ENCODE measurements at regions of chr1 and their contacts with region 1.

Region 1: DNA sequence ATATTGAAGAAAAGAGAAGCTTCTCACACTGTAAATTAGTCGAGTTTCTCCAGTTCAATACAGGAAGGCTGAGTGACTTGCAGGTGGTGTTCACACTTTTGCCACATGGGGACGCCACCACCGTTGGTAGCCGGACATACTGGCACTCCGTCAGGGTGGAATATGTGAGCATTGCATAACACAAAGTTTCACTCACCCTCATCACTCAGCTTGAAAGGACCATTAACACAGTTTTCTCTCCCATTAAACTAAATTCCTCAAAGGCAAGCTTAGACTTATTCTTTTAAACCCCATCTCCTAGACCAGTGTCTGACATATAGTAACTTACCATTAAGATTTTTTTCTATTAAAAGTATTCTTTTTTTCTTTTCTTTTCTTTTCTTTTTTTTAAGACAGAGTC is 105.3 kb upstream of the SERBP1 start:
- DNase-seq: peak; percentile 89
- H3K4me3 Mint-ChIP-seq: no peak overlapping the region
- H3K27ac Mint-ChIP-seq: no peak overlapping the region
- H3K4me1 Mint-ChIP-seq: no peaks in the 10 kb centered on the region
- H3K27me3 Mint-ChIP-seq: no peaks in the 10 kb centered on the region
- CTCF ChIP-seq: peak; percentile 83

Region 2: GRCh38 chr1:67760030-67760821 is 224.8 kb after region 1 on chr1:
- CTCF ChIA-PET with region 1: interaction called, 48 read pairs
- intact Hi-C with region 1: loop called (anchors 1 kb)
- DNase-seq: peak; percentile 67
- H3K4me3 Mint-ChIP-seq: no peak overlapping the region
- H3K27ac Mint-ChIP-seq: no peak overlapping the region
- H3K4me1 Mint-ChIP-seq: peaks cover 39% of the 10 kb centered on the region
- H3K27me3 Mint-ChIP-seq: no peaks in the 10 kb centered on the region
- CTCF ChIP-seq: peak; percentile 53

Region 3: DNA sequence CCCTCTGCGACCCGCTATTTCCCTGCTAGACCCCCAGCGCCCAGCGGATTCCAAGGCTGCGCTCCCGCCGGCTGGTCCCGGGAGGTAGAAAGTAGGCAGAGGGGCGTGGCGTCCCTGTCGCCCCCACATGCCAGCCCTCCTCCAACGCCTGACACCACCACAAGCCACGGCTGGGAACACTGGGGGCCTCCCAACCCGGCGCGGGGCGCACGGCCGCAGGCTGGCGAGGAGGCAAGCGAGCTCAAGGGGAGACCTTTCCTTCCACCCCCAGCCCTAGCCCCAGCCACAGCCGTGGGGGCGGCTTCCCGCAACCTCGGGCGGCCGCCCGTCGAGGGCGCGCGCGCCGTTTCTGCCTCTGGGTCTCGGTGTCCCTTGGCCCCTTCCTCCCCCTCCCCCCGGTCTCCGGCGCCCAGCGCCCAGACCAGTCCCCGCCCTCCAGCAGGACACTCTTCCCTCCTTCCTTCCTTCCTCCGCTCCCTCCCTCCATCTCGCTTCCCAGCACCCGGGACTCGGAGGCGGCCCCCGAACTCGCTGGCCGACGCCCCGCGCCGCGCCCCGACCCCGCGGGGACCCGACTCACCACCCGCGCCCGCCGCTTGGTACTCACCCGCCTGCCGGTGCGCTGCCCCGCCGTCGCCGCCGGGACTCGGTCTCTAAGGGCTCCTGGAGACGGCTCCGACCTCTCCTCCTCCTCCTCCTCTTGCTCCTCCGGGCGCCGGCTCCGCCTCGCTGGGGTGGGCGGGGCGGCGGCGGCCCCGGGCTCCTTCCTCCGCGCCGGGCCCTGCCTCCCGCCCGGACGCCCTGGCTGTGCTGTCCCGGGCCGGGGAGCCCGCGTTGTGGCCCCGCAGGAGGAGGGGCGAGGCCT is 297.5 kb after region 1 on chr1 and contains the start of gene GNG12:
- CTCF ChIA-PET with region 1: no interaction called
- intact Hi-C with region 1: loop called (anchors 5 kb)
- DNase-seq: peak; percentile 84
- H3K4me3 Mint-ChIP-seq: peak within 1 kb of the TSS; percentile 95
- H3K27ac Mint-ChIP-seq: peak within 1 kb of the TSS; percentile 98
- H3K4me1 Mint-ChIP-seq: peaks cover 13% of the 10 kb centered on the region
- H3K27me3 Mint-ChIP-seq: no peaks in the 10 kb centered on the region
- CTCF ChIP-seq: no peak
- total RNA-seq, gene GNG12: 72.2 and 85.6 TPM in 2 replicates

Region 4: GRCh38 chr1:68111519-68112436 is 576.3 kb after region 1 on chr1:
- CTCF ChIA-PET with region 1: no interaction called
- intact Hi-C with region 1: loop called (anchors 2 kb)
- DNase-seq: peak; percentile 59
- H3K4me3 Mint-ChIP-seq: no peak overlapping the region
- H3K27ac Mint-ChIP-seq: no peak overlapping the region
- H3K4me1 Mint-ChIP-seq: peaks cover 23% of the 10 kb centered on the region
- H3K27me3 Mint-ChIP-seq: no peaks in the 10 kb centered on the region
- CTCF ChIP-seq: peak; percentile 24

Measured in Calu3 (cell line).